ENCODE measurements at regions of chr9 and their contacts with region 1.

Region 1: DNA sequence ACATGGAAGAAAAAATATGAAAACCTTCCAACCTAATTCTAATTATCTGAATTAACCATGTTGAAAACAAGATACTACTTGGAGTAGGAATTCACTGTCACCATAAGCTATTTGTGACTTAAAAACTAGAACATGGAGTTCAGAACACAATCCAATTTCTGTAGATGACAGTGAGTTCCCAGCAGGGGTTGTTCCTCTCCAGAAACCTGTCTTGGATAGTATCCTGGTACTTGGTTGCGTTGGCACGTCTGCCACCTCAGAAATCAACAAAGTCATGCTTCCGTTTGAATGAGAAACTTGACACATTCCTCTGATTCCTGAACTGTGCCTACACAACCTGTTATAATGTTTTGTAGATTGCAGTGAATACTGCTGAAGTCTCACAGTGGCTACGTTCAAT is 789.9 kb upstream of the DMAC1 start:
- DNase-seq: no peak
- ATAC-seq: no peak
- H3K4me3 ChIP-seq: no peak overlapping the region
- H3K27ac ChIP-seq: no peak overlapping the region
- H3K4me1 ChIP-seq: no peaks in the 10 kb centered on the region
- H3K27me3 ChIP-seq: no peaks in the 10 kb centered on the region
- CTCF ChIP-seq: no peak
- POLR2A ChIP-seq: no peak
- RAD21 ChIP-seq: no peak

Region 2: GRCh38 chr9:7782400-7783120 is 806.9 kb before region 1 on chr9:
- CTCF ChIA-PET with region 1: no interaction called
- POLR2A ChIA-PET with region 1: no interaction called
- dilution Hi-C with region 1: no loop called
- in situ Hi-C with region 1: no loop called
- intact Hi-C with region 1: no loop called
- DNase-seq: no peak
- ATAC-seq: peak; percentile 35; the same call in 1 of the 2 replicates
- H3K4me3 ChIP-seq: no peak overlapping the region
- H3K27ac ChIP-seq: no peak overlapping the region
- H3K4me1 ChIP-seq: no peaks in the 10 kb centered on the region
- H3K27me3 ChIP-seq: no peaks in the 10 kb centered on the region
- CTCF ChIP-seq: no peak
- POLR2A ChIP-seq: no peak
- RAD21 ChIP-seq: no peak

Region 3: DNA sequence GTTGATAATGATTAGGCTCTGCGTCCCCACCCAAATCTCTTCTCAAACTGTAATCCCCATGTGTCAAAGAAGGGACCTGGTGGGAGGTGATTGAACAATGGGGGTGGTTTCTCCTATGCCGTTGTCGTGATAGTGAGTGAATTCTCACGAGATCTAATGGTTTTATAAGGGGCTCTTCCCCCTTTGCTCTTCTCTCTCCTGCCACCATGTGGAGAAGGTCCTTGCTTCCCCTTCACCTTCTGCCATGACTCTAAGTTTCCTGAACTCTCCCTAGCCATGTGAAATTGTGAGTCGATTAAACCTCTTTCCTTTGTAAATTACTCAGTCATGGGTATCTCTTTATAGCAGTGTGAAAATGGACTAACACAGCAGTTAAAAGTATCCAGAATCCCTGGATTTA is 74.7 kb before region 1 on chr9:
- CTCF ChIA-PET with region 1: no interaction called
- POLR2A ChIA-PET with region 1: no interaction called
- dilution Hi-C with region 1: no loop called
- in situ Hi-C with region 1: no loop called
- intact Hi-C with region 1: no loop called
- DNase-seq: no peak
- ATAC-seq: no peak
- H3K4me3 ChIP-seq: no peak overlapping the region
- H3K27ac ChIP-seq: no peak overlapping the region
- H3K4me1 ChIP-seq: no peaks in the 10 kb centered on the region
- H3K27me3 ChIP-seq: no peaks in the 10 kb centered on the region
- CTCF ChIP-seq: no peak
- POLR2A ChIP-seq: no peak
- RAD21 ChIP-seq: no peak

Region 4: DNA sequence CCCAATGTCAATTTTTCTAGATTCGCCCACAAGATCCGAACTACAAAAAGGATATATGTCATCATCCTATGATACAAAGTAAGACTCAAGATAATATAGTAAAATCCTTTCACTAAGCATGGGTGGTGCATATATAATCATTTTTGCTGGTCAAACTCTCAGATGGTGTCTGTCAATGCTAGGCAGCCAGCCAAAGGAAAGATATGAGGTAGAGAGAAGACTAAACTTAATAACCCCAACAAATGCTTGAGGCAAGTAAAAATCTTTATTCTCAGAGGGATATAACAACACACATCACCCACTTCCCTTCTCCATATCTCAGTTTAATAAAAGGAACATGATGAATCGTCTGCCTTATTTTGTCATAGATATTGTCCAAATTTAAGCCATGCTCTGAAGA is 51.3 kb after region 1 on chr9:
- CTCF ChIA-PET with region 1: no interaction called
- POLR2A ChIA-PET with region 1: no interaction called
- dilution Hi-C with region 1: no loop called
- in situ Hi-C with region 1: no loop called
- intact Hi-C with region 1: loop called (anchors 2 kb)
- DNase-seq: no peak
- ATAC-seq: no peak
- H3K4me3 ChIP-seq: no peak overlapping the region
- H3K27ac ChIP-seq: no peak overlapping the region
- H3K4me1 ChIP-seq: no peaks in the 10 kb centered on the region
- H3K27me3 ChIP-seq: no peaks in the 10 kb centered on the region
- CTCF ChIP-seq: no peak
- POLR2A ChIP-seq: no peak
- RAD21 ChIP-seq: no peak